CD4-positive, alpha-beta T cell (primary cell): ENCODE measurements at regions of chr20 and their contacts with region 1.

Region 1: GRCh38 chr20:49219089-49219923 is at the start of gene DDX27:
- DNase-seq: peak; percentile 90 to 99 (median 96)
- ATAC-seq: peak; percentile 84
- H3K4me3 ChIP-seq: peak within 1 kb of the TSS; percentile 79
- H3K4me3 Mint-ChIP-seq: peak within 1 kb of the TSS; percentile 86
- H3K27ac ChIP-seq: peak within 1 kb of the TSS; percentile 85 to 91
- H3K27ac Mint-ChIP-seq: peak within 1 kb of the TSS; percentile 87
- H3K4me1 ChIP-seq: peaks cover 33% of the 10 kb centered on the region
- H3K4me1 Mint-ChIP-seq: peaks cover 24% of the 10 kb centered on the region
- H3K27me3 ChIP-seq: no peaks in the 10 kb centered on the region
- H3K27me3 Mint-ChIP-seq: no peaks in the 10 kb centered on the region
- CTCF ChIP-seq: no peak
- total RNA-seq, gene DDX27: 116 to 126 TPM

Region 2: GRCh38 chr20:49046087-49046900 is 173.0 kb before region 1 on chr20 and contains the start of gene CSE1L:
- CTCF ChIA-PET with region 1: interaction called, 8 read pairs
- POLR2A ChIA-PET with region 1: no interaction called
- intact Hi-C with region 1: loop called (anchors 2 to 5 kb)
- DNase-seq: peak; percentile 88 to 97 (median 93)
- ATAC-seq: peak; percentile 84
- H3K4me3 ChIP-seq: peak within 1 kb of the TSS; percentile 97
- H3K4me3 Mint-ChIP-seq: peak within 1 kb of the TSS; percentile 97
- H3K27ac ChIP-seq: peak within 1 kb of the TSS; percentile 91 to 96
- H3K27ac Mint-ChIP-seq: peak within 1 kb of the TSS; percentile 92
- H3K4me1 ChIP-seq: peaks cover 41% of the 10 kb centered on the region
- H3K4me1 Mint-ChIP-seq: peaks cover 39% of the 10 kb centered on the region
- H3K27me3 ChIP-seq: no peaks in the 10 kb centered on the region
- H3K27me3 Mint-ChIP-seq: no peaks in the 10 kb centered on the region
- CTCF ChIP-seq: no peak
- total RNA-seq, gene CSE1L: 30.0 to 30.1 TPM

Region 3: DNA sequence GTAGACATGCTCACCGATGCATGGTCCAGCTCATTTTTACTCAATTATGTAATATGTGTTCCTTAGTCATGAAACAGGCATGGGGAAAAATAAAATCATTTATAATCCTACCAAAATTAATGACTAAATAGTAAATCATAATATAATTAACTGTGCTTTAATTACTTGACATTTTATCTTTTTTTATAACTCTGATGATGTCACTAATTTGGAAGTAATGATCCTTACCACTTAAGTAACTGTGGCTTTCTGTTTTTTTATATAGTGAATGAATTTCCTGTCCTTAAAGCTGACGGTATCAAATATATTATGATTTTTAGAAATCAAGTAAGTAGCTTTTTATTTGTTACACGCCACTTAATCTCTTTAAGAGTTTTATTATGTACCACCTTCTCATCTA is 141.0 kb before region 1 on chr20:
- CTCF ChIA-PET with region 1: no interaction called
- POLR2A ChIA-PET with region 1: no interaction called
- intact Hi-C with region 1: no loop called
- DNase-seq: no peak
- ATAC-seq: no peak
- H3K4me3 ChIP-seq: no peak overlapping the region
- H3K4me3 Mint-ChIP-seq: no peak overlapping the region
- H3K27ac ChIP-seq: no peak overlapping the region
- H3K27ac Mint-ChIP-seq: no peak overlapping the region
- H3K4me1 ChIP-seq: no peaks in the 10 kb centered on the region
- H3K4me1 Mint-ChIP-seq: peaks cover 5% of the 10 kb centered on the region
- H3K27me3 ChIP-seq: no peaks in the 10 kb centered on the region
- H3K27me3 Mint-ChIP-seq: no peaks in the 10 kb centered on the region
- CTCF ChIP-seq: no peak

Region 4: GRCh38 chr20:49132995-49133478 is 86.3 kb before region 1 on chr20:
- CTCF ChIA-PET with region 1: interaction called, 52 read pairs
- POLR2A ChIA-PET with region 1: interaction called, 13 read pairs
- intact Hi-C with region 1: loop called (anchors 1 kb)
- DNase-seq: peak in 5 of 14 experiments; percentile 10 to 75 (median 71)
- ATAC-seq: peak; percentile 76
- H3K4me3 ChIP-seq: no peak overlapping the region
- H3K4me3 Mint-ChIP-seq: no peak overlapping the region
- H3K27ac ChIP-seq: no peak overlapping the region
- H3K27ac Mint-ChIP-seq: peak overlapping the region; percentile 6
- H3K4me1 ChIP-seq: no peaks in the 10 kb centered on the region
- H3K4me1 Mint-ChIP-seq: peaks cover 24% of the 10 kb centered on the region
- H3K27me3 ChIP-seq: no peaks in the 10 kb centered on the region
- H3K27me3 Mint-ChIP-seq: no peaks in the 10 kb centered on the region
- CTCF ChIP-seq: peak; percentile 72

Region 5: DNA sequence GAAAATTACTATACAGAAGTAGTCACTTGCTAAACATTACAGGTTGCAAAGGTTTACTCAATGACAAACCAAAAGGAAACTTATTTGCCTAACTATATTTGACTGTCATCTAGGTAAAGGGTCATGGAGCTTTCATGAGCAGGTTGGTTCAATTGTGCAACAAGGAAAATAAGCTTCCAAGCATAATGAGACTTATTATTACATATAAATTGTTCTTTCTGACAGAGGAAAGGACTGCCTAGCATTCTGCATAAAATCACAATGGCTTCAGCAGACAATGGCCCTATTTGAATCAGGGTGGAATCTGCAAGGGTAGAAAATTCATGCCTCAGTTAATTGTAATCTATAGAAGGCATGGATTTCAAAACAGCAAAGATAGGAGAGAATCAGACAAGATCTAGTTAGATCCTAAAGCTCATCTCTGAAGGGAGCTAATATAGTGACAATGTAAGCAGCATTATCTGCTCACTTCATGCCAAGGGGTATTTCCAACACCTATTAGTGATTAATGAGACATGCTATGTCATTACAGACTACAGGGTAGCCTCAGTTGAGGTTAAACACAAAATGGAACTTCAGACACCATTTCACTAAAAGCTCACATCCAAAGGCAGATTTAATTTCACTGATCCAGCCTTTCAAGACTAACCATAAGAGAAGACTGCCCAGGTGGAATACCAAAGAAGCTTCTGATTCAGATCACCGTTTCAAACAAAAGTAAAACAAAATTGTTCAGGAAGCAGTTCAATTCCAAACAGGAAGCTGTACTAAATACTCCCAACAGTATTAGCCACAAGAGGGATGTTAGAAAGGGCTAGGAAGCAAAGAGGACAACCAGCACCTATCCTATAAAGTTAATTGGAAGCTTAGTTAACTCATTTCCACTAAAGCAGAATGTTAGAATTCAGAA is 39.7 kb before region 1 on chr20:
- CTCF ChIA-PET with region 1: interaction called, 21 read pairs
- POLR2A ChIA-PET with region 1: interaction called, 4 read pairs
- intact Hi-C with region 1: no loop called
- DNase-seq: no peak
- ATAC-seq: no peak
- H3K4me3 ChIP-seq: no peak overlapping the region
- H3K4me3 Mint-ChIP-seq: peak overlapping the region; percentile 20
- H3K27ac ChIP-seq: no peak overlapping the region
- H3K27ac Mint-ChIP-seq: peak overlapping the region; percentile 21
- H3K4me1 ChIP-seq: peaks cover 30% of the 10 kb centered on the region
- H3K4me1 Mint-ChIP-seq: peaks cover 65% of the 10 kb centered on the region
- H3K27me3 ChIP-seq: no peaks in the 10 kb centered on the region
- H3K27me3 Mint-ChIP-seq: no peaks in the 10 kb centered on the region
- CTCF ChIP-seq: no peak

Region 6: DNA sequence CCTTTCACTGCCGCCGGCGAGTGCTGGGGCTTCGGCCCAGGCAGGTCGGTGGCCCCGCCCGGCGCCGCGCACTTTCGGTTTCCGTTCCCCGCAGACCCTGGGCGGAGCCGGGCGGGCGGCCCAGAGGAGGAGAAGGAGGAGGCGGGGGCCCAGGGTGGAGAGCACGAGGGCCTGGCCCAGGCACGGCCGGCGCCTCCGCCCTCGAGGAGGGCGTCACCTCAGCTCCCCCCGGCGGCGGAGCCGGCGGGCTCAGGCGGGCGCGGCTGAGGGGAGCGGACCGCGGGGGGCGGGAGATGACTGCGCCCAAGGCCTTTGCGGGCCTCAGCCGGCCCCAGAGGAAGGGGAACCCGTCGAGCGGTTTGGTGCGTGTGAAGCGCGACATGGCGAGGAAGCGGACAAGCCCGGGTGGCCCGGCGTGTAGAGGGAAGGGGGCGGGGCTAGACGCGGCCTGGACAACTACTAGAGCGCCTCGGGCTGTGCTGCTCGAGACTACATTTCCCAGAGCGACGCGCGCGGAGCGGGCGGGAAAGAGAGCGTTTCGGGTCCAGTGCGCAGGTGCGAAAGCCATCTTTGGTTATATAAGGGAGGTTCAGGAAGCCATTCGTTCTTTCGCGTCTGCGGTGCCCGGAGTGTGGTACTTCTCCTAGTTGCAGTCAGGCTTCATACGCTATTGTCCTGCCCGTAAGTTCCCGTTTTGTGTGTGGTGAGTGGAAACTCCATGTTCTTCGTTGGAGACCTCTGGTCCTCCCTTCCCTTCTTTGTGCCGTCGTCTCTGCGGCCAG is 58.9 kb after region 1 on chr20 and contains the start of gene ZNFX1:
- CTCF ChIA-PET with region 1: interaction called, 5 read pairs
- POLR2A ChIA-PET with region 1: interaction called, 5 read pairs
- intact Hi-C with region 1: loop called (anchors 1 to 2 kb)
- DNase-seq: peak; percentile 95 to 99 (median 99)
- ATAC-seq: peak; percentile 84
- H3K4me3 ChIP-seq: peak within 1 kb of the TSS; percentile 80
- H3K4me3 Mint-ChIP-seq: peak within 1 kb of the TSS; percentile 89
- H3K27ac ChIP-seq: peak within 1 kb of the TSS; percentile 90 to 95
- H3K27ac Mint-ChIP-seq: peak within 1 kb of the TSS; percentile 93
- H3K4me1 ChIP-seq: peaks cover 79% of the 10 kb centered on the region
- H3K4me1 Mint-ChIP-seq: peaks cover 70% of the 10 kb centered on the region
- H3K27me3 ChIP-seq: no peaks in the 10 kb centered on the region
- H3K27me3 Mint-ChIP-seq: peaks cover 4% of the 10 kb centered on the region
- CTCF ChIP-seq: no peak
- total RNA-seq, gene ZNFX1: 50.6 to 51.6 TPM